Breast epithelium (tissue), 4 donors: ENCODE measurements at regions of chrX and their contacts with region 1.

Region 1: GRCh38 chrX:8204170-8204935 is 33.3 kb upstream of the VCX2 start:
- DNase-seq: no peak
- H3K4me3 ChIP-seq: no peak overlapping the region
- H3K27ac ChIP-seq: no peak overlapping the region
- H3K4me1 ChIP-seq: no peaks in the 10 kb centered on the region
- H3K27me3 ChIP-seq: no peaks in the 10 kb centered on the region
- CTCF ChIP-seq: no peak
- POLR2A ChIP-seq: no peak

Region 2: DNA sequence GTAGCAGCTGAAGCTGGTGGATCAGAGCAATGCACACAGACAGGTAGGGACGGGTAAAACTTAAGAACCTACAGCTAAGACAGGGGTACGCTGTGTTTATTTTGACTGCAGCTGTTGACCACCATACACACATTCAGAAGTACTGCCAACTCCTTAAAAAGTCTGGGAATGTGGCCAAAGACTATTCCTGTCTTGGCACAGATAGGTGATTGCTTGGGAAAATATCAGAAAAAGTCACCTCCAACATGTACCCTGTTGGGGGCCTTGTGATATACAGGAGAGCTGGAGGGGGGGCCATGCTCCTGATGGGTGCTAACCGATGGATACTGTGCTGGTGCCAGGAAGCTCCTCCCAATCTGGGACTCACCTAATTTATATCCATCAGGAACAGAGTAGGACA is 154.5 kb before region 1 on chrX:
- intact Hi-C with region 1: no loop called
- DNase-seq: no peak
- H3K4me3 ChIP-seq: no peak overlapping the region
- H3K27ac ChIP-seq: no peak overlapping the region
- H3K4me1 ChIP-seq: no peaks in the 10 kb centered on the region
- H3K27me3 ChIP-seq: no peaks in the 10 kb centered on the region
- CTCF ChIP-seq: no peak
- POLR2A ChIP-seq: no peak

Region 3: DNA sequence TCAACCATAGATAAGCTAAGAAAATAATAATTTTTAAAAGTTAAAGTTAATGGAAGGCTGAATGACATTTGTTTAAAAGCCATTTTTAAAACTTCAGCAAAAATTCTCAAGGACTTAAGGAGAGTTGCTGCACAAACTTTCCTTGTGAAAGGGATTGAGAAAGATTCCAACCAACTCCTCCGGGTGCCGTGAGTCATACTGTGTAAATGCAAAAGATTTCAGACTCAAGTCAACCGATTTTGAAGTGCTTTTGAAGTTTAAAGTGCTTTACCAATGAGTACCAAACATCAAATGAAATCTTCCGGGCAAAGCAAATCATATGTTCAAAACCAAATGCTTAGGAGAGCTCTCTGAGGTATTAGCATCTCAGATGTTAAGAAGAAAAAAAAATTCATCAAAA is 64.6 kb before region 1 on chrX:
- intact Hi-C with region 1: loop called (anchors 2 kb)
- DNase-seq: no peak
- H3K4me3 ChIP-seq: no peak overlapping the region
- H3K27ac ChIP-seq: no peak overlapping the region
- H3K4me1 ChIP-seq: no peaks in the 10 kb centered on the region
- H3K27me3 ChIP-seq: no peaks in the 10 kb centered on the region
- CTCF ChIP-seq: no peak
- POLR2A ChIP-seq: no peak